ENCODE measurements at regions of chr6 and their contacts with region 1.

Region 1: DNA sequence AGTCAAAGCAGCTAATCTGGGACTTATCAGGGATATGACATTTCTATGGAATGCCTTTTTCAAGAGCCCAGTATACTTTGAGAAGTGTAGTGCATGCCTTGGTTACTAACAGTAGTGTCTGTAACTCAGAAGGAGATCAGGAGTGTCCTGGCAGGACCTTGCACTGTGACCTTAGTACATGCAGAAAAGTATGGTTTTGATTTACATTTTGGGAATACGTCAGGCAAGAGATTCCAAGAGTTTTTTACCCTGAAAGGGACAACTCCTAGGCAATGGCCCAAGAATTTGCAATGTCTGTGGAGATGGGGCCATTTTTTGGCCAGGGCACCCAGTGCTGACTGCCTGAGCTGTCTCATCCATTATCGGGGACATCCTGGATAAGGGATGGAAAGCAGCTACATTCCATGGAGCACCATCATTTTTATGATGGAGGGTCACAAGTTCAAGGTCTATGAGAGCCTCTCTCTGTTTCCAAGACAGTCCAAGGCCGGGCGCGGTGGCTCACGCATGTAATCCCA is 80.2 kb downstream of the FAM50B start:
- DNase-seq: no peak
- ATAC-seq: no peak
- H3K4me3 ChIP-seq: no peak overlapping the region
- H3K27ac ChIP-seq: no peak overlapping the region
- H3K4me1 ChIP-seq: peaks cover 16% of the 10 kb centered on the region
- H3K27me3 ChIP-seq: no peaks in the 10 kb centered on the region
- CTCF ChIP-seq: no peak
- EP300 ChIP-seq: no peak
- POLR2A ChIP-seq: no peak
- RAD21 ChIP-seq: no peak

Region 2: GRCh38 chr6:3848925-3849605 is 80.3 kb before region 1 on chr6 and contains the start of gene FAM50B:
- CTCF ChIA-PET with region 1: interaction called, 39 read pairs
- POLR2A ChIA-PET with region 1: interaction called, 3 read pairs
- in situ Hi-C with region 1: no loop called
- intact Hi-C with region 1: no loop called
- DNase-seq: no peak
- ATAC-seq: peak; percentile 87
- H3K4me3 ChIP-seq: no peak within 1 kb of the TSS
- H3K27ac ChIP-seq: no peak within 1 kb of the TSS
- H3K4me1 ChIP-seq: peaks cover 40% of the 10 kb centered on the region
- H3K27me3 ChIP-seq: no peaks in the 10 kb centered on the region
- CTCF ChIP-seq: peak; percentile 74
- EP300 ChIP-seq: no peak
- POLR2A ChIP-seq: no peak
- RAD21 ChIP-seq: peak; percentile 96
- total RNA-seq, gene FAM50B: not detected in 2 replicates

Region 3: DNA sequence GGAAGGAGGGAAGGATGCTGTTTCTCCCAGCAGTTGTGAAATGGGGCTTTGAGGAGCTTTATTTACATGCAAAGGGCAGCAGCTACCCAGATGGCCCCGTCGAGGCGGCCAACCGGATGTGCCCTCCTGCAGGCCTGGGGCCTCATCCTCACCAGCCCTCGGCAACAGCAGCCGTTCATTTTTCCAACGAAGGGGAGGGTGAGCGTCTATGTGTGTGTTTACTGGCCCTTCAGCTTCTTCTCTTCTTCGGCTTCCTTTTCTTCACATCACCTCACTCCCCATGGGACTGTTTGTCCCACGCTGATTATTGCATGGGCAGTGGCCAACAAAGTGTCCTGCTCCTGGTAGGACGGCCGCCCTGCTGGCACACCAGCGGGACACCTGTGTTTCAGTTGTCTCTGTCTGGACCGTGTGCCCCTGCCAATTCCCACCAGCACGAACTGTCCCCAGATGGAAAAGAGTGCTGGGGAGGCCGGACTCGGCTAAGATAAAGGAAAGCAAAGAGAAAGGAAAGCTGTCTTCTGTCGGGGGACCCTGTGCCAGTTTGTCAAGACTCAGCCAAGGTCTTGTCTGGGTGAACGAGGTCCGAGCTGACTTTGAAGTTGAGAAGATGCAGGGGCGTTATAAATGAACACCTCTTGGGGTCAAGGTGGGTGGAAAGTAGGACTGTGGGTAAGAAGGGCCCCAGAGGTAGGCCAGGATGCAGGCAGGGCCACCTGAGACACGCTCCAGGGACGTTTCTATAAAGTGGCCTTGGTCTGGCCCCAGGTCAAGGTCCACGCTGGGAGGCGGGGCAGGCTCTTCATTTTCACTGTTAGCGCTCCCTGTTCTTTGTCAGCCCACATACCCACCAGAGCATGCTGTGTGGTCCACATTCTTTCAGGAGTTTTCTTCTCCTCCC is 23.1 kb before region 1 on chr6:
- CTCF ChIA-PET with region 1: no interaction called
- POLR2A ChIA-PET with region 1: interaction called, 16 read pairs
- in situ Hi-C with region 1: no loop called
- intact Hi-C with region 1: no loop called
- DNase-seq: peak; percentile 94
- ATAC-seq: peak; percentile 93
- H3K4me3 ChIP-seq: peak overlapping the region in 1 of 3 experiments; percentile 39; a peak in 1 of 6 replicates
- H3K27ac ChIP-seq: peak overlapping the region; percentile 86
- H3K4me1 ChIP-seq: peaks cover 68% of the 10 kb centered on the region
- H3K27me3 ChIP-seq: no peaks in the 10 kb centered on the region
- CTCF ChIP-seq: no peak
- EP300 ChIP-seq: peak; percentile 77 to 91
- POLR2A ChIP-seq: peak; percentile 55 to 57; a peak in 2 of 4 replicates
- RAD21 ChIP-seq: peak; percentile 62